Activated B cell treated with CpG ODN at 0.5 μM for 24 hours (primary cell): ENCODE measurements at regions of chr11 and their contacts with region 1.

Region 1: DNA sequence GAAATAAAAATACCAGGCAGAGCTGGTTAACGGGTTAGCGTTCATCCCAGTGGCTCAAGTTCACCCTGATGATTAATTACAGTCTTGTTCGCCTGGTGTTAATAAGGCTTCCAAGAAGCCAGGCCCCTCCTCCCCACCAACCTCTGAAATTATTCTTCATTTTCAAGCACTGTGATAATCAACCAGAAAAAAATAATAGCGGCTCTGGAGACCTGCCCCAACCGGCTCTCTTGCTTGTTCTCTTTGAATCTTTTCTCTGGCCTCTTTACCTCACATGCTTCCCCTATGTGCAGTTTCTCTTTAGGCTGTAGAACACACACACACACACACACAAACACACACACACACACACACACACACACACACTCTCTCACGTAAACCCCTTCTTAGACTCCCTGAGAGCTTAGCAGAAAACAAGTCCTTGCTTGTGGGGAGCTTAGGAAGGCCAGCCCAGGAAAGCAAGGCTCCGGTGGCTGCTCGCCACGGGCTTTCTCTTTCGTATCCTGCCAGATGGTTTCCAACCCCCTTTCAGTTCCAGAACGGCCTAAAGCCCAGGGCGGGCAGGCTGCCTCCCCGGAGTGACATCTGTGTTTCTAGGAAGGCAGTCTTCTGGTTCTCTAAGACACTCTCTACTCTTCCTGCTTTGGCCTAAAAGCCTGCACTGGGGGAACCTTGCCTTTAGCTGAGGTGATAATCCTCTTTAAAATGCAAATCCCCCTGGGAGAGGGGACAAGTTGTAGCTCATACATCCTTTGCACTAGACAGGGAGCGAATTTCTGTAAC is 106.4 kb upstream of the SESN3 start:
- DNase-seq: peak; percentile 48
- ATAC-seq: peak; percentile 63
- H3K4me3 Mint-ChIP-seq: no peak overlapping the region
- H3K27ac Mint-ChIP-seq: no peak overlapping the region
- H3K4me1 Mint-ChIP-seq: peaks cover 1% of the 10 kb centered on the region
- H3K27me3 Mint-ChIP-seq: no peaks in the 10 kb centered on the region
- CTCF ChIP-seq: no peak

Region 2: DNA sequence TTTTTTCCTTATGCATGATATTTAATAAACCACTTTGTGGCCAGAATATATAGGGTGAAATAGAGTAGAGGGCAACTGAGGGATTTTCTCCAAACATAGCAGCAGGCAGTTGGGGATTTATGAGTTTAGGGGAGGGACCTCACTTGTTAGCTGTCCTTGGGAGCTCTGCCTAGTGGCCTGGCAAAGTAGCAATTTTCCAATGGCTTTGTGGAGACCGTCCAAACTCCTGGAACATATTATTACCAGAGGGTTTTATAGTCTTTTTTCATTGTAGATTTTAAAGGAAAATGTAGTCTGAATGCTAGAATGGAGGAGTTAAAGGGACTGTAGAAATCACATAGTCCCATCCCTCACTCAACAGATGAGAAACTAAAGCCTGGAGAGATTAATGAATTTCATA is 537.0 kb before region 1 on chr11:
- CTCF ChIA-PET with region 1: no interaction called
- POLR2A ChIA-PET with region 1: no interaction called
- intact Hi-C with region 1: no loop called
- DNase-seq: no peak
- ATAC-seq: no peak
- H3K4me3 Mint-ChIP-seq: no peak overlapping the region
- H3K27ac Mint-ChIP-seq: no peak overlapping the region
- H3K4me1 Mint-ChIP-seq: no peaks in the 10 kb centered on the region
- H3K27me3 Mint-ChIP-seq: no peaks in the 10 kb centered on the region
- CTCF ChIP-seq: no peak

Region 3: GRCh38 chr11:95089620-95090542 is 247.5 kb before region 1 on chr11 and contains the start of gene ENDOD1:
- CTCF ChIA-PET with region 1: no interaction called
- POLR2A ChIA-PET with region 1: no interaction called
- intact Hi-C with region 1: loop called (anchors 5 kb)
- DNase-seq: peak; percentile 88
- ATAC-seq: peak; percentile 93
- H3K4me3 Mint-ChIP-seq: peak within 1 kb of the TSS; percentile 92
- H3K27ac Mint-ChIP-seq: peak within 1 kb of the TSS; percentile 94
- H3K4me1 Mint-ChIP-seq: peaks cover 56% of the 10 kb centered on the region
- H3K27me3 Mint-ChIP-seq: no peaks in the 10 kb centered on the region
- CTCF ChIP-seq: no peak
- total RNA-seq, gene ENDOD1: 9.5 and 9.8 TPM in 2 replicates

Region 4: DNA sequence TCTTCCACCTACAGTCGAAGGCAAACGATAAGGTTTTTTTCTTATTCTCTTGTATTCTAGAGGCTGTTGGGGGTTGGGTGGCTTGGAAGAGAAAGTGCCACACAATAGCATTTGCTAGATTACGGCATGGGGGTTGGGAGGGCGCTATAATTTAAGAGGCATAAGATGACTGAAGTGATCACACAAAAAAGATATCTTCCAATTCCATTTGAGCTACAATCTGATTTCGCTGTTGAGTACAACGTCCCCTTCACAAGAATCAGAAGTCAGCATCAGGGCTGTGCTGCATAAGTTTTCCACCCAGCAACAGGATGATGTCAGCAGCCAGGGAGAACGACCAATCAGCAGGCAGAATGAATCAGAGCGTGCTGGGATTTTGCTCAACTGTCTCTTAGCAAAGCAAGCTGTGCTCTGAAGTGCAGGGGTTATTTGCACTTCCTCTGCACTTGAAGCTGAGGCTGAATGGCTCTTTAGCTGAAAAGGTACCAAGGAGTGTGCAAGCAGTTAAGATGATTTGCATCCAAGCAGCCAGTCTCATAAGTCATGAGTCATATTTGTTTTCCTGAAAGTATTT is 83.1 kb before region 1 on chr11:
- CTCF ChIA-PET with region 1: interaction called, 3 read pairs
- POLR2A ChIA-PET with region 1: interaction called, 12 read pairs
- intact Hi-C with region 1: loop called (anchors 1 kb)
- DNase-seq: peak; percentile 54
- ATAC-seq: peak; percentile 94
- H3K4me3 Mint-ChIP-seq: peak overlapping the region; percentile 75
- H3K27ac Mint-ChIP-seq: peak overlapping the region; percentile 91
- H3K4me1 Mint-ChIP-seq: peaks cover 81% of the 10 kb centered on the region
- H3K27me3 Mint-ChIP-seq: no peaks in the 10 kb centered on the region
- CTCF ChIP-seq: no peak

Region 5: GRCh38 chr11:95279921-95280868 is 57.2 kb before region 1 on chr11:
- CTCF ChIA-PET with region 1: no interaction called
- POLR2A ChIA-PET with region 1: interaction called, 4 read pairs
- intact Hi-C with region 1: loop called (anchors 1 kb)
- DNase-seq: peak; percentile 24
- ATAC-seq: peak; percentile 84
- H3K4me3 Mint-ChIP-seq: peak overlapping the region; percentile 39
- H3K27ac Mint-ChIP-seq: peak overlapping the region; percentile 85
- H3K4me1 Mint-ChIP-seq: peaks cover 49% of the 10 kb centered on the region
- H3K27me3 Mint-ChIP-seq: no peaks in the 10 kb centered on the region
- CTCF ChIP-seq: no peak

Region 6: DNA sequence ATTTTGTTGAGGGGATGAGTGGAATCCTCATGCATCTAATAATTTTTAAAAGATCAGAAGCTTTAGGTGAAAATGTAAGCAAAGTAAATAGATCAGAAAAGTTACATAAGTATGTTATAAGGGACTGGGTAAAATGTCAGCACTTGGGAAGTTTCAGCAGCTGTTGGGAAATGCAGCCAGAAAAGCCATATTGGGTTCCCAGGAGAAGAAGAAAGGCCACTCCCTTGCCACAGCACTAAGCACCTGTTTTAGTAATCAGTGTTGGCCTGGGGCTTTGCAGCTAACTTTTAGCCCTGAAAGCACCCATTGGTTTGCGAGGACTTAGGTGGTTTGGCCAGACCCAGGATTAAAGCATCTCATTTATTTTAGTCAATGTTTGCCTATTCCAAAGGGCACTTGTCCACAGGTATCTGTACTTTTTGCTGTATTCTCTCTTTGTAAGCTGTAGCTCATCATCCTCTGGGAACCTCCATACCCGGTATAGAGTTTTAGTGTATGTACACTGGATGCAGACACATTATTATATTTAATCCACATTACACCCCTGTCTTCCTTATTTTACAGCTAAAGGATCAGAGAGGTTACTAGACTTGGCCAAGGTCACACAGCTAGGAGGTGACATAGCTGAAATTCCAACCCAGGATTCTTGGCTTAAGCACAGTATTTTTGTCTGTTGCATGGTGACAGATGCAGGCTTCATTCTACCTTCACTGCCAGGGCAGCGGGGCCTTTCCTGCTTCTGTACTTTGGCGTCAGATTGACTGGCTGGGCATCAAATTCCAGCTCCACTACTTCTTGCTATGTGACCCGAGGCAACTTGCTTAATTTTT is 21.4 kb after region 1 on chr11:
- CTCF ChIA-PET with region 1: no interaction called
- POLR2A ChIA-PET with region 1: no interaction called
- intact Hi-C with region 1: no loop called
- DNase-seq: no peak
- ATAC-seq: no peak
- H3K4me3 Mint-ChIP-seq: no peak overlapping the region
- H3K27ac Mint-ChIP-seq: no peak overlapping the region
- H3K4me1 Mint-ChIP-seq: peaks cover 2% of the 10 kb centered on the region
- H3K27me3 Mint-ChIP-seq: no peaks in the 10 kb centered on the region
- CTCF ChIP-seq: no peak

Region 7: GRCh38 chr11:95378789-95379188 is 41.4 kb after region 1 on chr11:
- CTCF ChIA-PET with region 1: no interaction called
- POLR2A ChIA-PET with region 1: no interaction called
- intact Hi-C with region 1: no loop called
- DNase-seq: no peak
- ATAC-seq: no peak
- H3K4me3 Mint-ChIP-seq: no peak overlapping the region
- H3K27ac Mint-ChIP-seq: no peak overlapping the region
- H3K4me1 Mint-ChIP-seq: no peaks in the 10 kb centered on the region
- H3K27me3 Mint-ChIP-seq: no peaks in the 10 kb centered on the region
- CTCF ChIP-seq: no peak

Region 8: DNA sequence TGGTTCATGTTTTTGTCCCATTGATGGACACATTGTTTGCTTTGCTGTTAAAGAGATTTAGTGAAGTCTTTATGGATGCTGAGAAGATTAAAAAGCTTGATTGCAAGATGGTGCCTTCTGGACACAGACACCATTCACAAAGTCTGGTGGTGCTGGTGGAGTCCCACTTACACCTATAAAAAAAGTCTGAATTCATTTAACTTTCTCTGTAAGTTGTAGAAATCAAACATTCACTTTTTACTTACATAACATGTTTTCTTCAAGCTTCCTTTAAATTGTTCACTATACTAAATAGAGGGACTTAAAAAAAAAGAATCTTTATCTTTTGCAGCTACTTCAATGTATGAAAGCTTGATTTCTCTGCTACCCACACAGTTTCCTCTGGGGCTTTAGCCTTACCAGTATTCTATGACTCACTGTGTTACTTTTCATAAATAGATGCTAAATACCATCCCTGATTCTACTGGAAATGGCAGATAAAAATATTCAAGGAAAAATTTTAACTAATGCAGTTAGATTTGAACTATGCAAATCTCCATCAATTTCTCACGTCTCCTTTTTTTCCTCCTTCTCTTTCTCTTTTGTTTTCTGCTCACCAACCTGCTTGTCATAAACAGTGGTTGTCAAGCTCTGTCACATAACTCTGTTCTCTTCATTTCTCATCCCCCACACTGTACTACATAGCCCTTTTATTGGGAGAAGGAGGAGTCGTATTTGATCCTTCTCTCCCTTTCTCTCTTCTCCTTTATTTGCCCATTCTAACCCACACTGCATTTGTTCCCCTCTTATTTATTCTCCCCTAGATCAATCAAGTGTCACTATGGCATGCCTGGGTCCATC is 362.5 kb after region 1 on chr11:
- CTCF ChIA-PET with region 1: interaction called, 8 read pairs
- POLR2A ChIA-PET with region 1: no interaction called
- intact Hi-C with region 1: loop called (anchors 5 kb)
- DNase-seq: no peak
- ATAC-seq: peak; percentile 65
- H3K4me3 Mint-ChIP-seq: peak overlapping the region; percentile 66
- H3K27ac Mint-ChIP-seq: peak overlapping the region; percentile 98
- H3K4me1 Mint-ChIP-seq: peaks cover 52% of the 10 kb centered on the region
- H3K27me3 Mint-ChIP-seq: no peaks in the 10 kb centered on the region
- CTCF ChIP-seq: no peak

Region 9: GRCh38 chr11:95715777-95716241 is 378.4 kb after region 1 on chr11:
- CTCF ChIA-PET with region 1: no interaction called
- POLR2A ChIA-PET with region 1: no interaction called
- intact Hi-C with region 1: no loop called
- DNase-seq: peak; percentile 39
- ATAC-seq: peak; percentile 78
- H3K4me3 Mint-ChIP-seq: peak overlapping the region; percentile 75
- H3K27ac Mint-ChIP-seq: peak overlapping the region; percentile 95
- H3K4me1 Mint-ChIP-seq: peaks cover 92% of the 10 kb centered on the region
- H3K27me3 Mint-ChIP-seq: no peaks in the 10 kb centered on the region
- CTCF ChIP-seq: no peak